Endothelial cell of umbilical vein (primary cell): ENCODE measurements at regions of chr13 and their contacts with region 1.

Region 1: GRCh38 chr13:51452361-51453206 is at the start of gene INTS6:
- DNase-seq: peak; percentile 99
- H3K4me3 ChIP-seq: peak within 1 kb of the TSS; percentile 79 to 99 (median 91)
- H3K27ac ChIP-seq: peak within 1 kb of the TSS; percentile 93
- H3K4me1 ChIP-seq: peaks cover 20% of the 10 kb centered on the region
- H3K27me3 ChIP-seq: no peaks in the 10 kb centered on the region
- CTCF ChIP-seq: no peak
- POLR2A ChIP-seq: peak; percentile 99
- total RNA-seq, gene INTS6: 38.2 and 45.4 TPM in 2 replicates

Region 2: GRCh38 chr13:51222037-51222685 is 230.4 kb before region 1 on chr13 and contains the start of gene FAM124A:
- CTCF ChIA-PET with region 1: no interaction called
- POLR2A ChIA-PET with region 1: no interaction called
- dilution Hi-C with region 1: no loop called
- intact Hi-C with region 1: loop called (anchors 2 kb)
- DNase-seq: peak; percentile 36
- H3K4me3 ChIP-seq: peak within 1 kb of the TSS; percentile 29 to 64 (median 46)
- H3K27ac ChIP-seq: no peak within 1 kb of the TSS
- H3K4me1 ChIP-seq: peaks cover 7% of the 10 kb centered on the region
- H3K27me3 ChIP-seq: no peaks in the 10 kb centered on the region
- CTCF ChIP-seq: peak in 1 of 2 donors; percentile 37
- POLR2A ChIP-seq: peak; percentile 32
- total RNA-seq, gene FAM124A: 7.4 and 9.9 TPM in 2 replicates

Region 3: GRCh38 chr13:51583875-51584730 is 131.5 kb after region 1 on chr13 and contains the start of gene WDFY2:
- CTCF ChIA-PET with region 1: no interaction called
- POLR2A ChIA-PET with region 1: interaction called, 22 read pairs
- dilution Hi-C with region 1: no loop called
- intact Hi-C with region 1: loop called (anchors 1 kb)
- DNase-seq: peak; percentile 100
- H3K4me3 ChIP-seq: peak within 1 kb of the TSS; percentile 80 to 90 (median 85)
- H3K27ac ChIP-seq: peak within 1 kb of the TSS; percentile 52
- H3K4me1 ChIP-seq: peaks cover 14% of the 10 kb centered on the region
- H3K27me3 ChIP-seq: no peaks in the 10 kb centered on the region
- CTCF ChIP-seq: peak in 1 of 2 donors; percentile 17
- POLR2A ChIP-seq: no peak
- total RNA-seq, gene WDFY2: 5.5 TPM in 2 replicates

Region 4: GRCh38 chr13:51797664-51798488 is 345.3 kb after region 1 on chr13:
- CTCF ChIA-PET with region 1: interaction called, 13 read pairs
- POLR2A ChIA-PET with region 1: interaction called, 13 read pairs
- dilution Hi-C with region 1: no loop called
- intact Hi-C with region 1: loop called (anchors 1 kb)
- DNase-seq: peak; percentile 36
- H3K4me3 ChIP-seq: no peak overlapping the region
- H3K27ac ChIP-seq: no peak overlapping the region
- H3K4me1 ChIP-seq: peaks cover 24% of the 10 kb centered on the region
- H3K27me3 ChIP-seq: no peaks in the 10 kb centered on the region
- CTCF ChIP-seq: peak; percentile 16 to 27
- POLR2A ChIP-seq: no peak

Region 5: DNA sequence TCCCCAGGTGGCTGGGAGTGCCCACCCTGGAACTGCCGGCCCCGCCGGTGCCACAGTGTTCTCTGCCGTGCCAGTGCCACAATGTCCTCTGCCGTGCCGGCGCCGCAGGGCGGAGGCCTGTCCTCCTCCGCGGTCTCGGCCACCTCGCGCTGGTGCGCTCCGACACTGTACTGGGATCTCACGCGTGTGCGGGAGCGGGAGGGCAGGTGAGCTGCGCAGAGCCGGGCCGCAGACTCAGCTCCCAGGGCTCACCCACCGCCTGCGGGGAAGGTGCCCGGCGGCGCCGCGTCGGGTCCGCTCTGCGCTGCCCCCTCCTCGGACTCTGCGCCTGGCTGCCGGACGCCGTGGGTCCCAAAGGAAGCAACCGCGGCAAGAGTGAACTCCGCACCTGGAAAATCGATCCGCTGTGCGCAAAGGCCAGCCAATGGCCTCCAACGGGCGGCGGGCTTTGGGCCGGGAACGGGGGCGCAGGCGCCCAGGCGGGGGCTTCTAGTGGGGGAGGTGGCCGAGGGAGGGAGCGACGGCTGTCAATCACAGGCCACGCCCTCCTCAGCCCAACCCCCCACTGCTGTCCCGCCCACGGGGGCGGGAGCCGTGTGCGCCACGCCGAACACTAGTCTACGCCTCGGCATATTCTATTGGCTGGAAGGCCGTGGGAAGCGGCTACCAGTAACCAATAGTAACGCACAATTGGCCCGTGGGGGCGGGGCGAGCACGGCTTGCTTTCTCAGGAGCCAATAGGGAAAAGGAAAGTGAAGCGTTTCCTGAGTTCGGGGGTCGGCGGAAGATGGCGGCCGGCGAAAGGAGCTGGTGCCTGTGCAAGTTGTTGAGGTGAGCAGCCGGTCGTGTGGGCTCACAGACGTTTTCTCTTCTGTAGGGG is 559.3 kb after region 1 on chr13 and contains the start of gene ALG11:
- CTCF ChIA-PET with region 1: no interaction called
- POLR2A ChIA-PET with region 1: no interaction called
- dilution Hi-C with region 1: no loop called
- intact Hi-C with region 1: loop called (anchors 2 kb)
- DNase-seq: peak; percentile 100
- H3K4me3 ChIP-seq: peak within 1 kb of the TSS; percentile 51 to 88 (median 74)
- H3K27ac ChIP-seq: peak within 1 kb of the TSS; percentile 72
- H3K4me1 ChIP-seq: peaks cover 14% of the 10 kb centered on the region
- H3K27me3 ChIP-seq: peaks cover 13 to 14% of the 10 kb centered on the region in 2 experiments
- CTCF ChIP-seq: no peak
- POLR2A ChIP-seq: peak; percentile 89
- total RNA-seq, gene ALG11: 31.0 and 34.7 TPM in 2 replicates